Activated naive CD4-positive, alpha-beta T cell treated with anti-CD3 and anti-CD28 coated beads for 36 hours (primary cell): ENCODE measurements at regions of chr13 and their contacts with region 1.

Region 1: GRCh38 chr13:48879432-48879831 is 96.3 kb upstream of the FNDC3A start:
- DNase-seq: no peak
- H3K4me3 Mint-ChIP-seq: no peak overlapping the region
- H3K27ac Mint-ChIP-seq: no peak overlapping the region
- H3K4me1 Mint-ChIP-seq: peaks cover 42% of the 10 kb centered on the region
- H3K27me3 Mint-ChIP-seq: no peaks in the 10 kb centered on the region

Region 2: DNA sequence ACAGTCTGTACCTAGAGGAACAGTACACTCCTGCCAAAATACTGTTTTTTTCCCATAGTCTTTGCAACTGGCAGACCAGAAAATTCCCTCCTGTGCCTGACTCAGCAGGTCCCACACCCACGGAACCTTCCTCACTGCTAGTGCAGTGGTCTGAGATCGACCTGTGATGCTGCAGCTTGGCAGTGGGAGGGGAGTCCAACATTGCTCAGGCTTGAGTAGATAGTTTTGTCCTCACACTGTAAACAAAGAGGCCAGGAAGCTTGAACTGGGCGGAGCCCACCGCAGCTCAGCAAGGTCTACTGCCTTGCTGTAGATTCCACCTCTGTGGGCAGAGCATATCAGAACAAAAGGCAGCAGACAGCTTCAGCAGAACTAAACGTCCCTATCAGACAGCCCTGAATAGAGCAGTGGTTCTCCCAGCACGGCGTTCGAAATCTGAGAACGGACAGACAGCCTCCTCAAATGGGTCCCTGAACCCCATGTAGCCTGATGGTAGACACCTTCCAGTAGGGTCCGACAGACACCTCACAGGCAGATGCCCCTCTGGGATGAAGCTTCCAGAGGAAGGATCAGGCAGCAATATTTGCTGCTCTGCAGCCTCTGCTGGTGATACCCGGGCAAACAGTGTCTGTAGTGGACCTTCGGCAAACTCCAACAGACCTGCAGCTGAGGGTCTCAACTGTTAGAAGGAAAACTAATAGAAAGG is 971.1 kb before region 1 on chr13:
- CTCF ChIA-PET with region 1: no interaction called
- intact Hi-C with region 1: no loop called
- DNase-seq: no peak
- H3K4me3 Mint-ChIP-seq: no peak overlapping the region
- H3K27ac Mint-ChIP-seq: no peak overlapping the region
- H3K4me1 Mint-ChIP-seq: no peaks in the 10 kb centered on the region
- H3K27me3 Mint-ChIP-seq: no peaks in the 10 kb centered on the region

Region 3: GRCh38 chr13:48155848-48156247 is 723.6 kb before region 1 on chr13:
- CTCF ChIA-PET with region 1: no interaction called
- intact Hi-C with region 1: loop called (anchors 5 kb)
- DNase-seq: peak; percentile 44
- H3K4me3 Mint-ChIP-seq: peak overlapping the region; percentile 74
- H3K27ac Mint-ChIP-seq: peak overlapping the region; percentile 99
- H3K4me1 Mint-ChIP-seq: peaks cover 85% of the 10 kb centered on the region
- H3K27me3 Mint-ChIP-seq: no peaks in the 10 kb centered on the region

Region 4: DNA sequence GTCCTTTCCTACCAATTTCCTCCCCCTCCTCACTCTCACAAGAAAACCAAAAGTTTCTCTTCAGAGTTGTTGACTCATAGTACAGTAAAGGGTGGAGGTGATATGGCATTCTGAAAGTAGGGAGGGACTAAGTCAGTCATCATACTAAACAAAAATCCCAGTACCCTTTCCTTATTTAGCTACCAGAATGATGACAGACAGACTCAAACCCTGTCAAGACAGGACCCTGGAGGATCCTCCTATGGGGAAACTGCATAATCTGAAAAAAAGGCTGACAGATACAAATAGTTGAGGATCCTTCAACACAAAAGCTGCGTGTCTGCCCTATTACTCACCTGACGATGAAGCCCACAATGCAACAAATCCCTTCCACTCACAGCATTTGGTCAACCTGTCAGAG is 170.2 kb before region 1 on chr13:
- CTCF ChIA-PET with region 1: no interaction called
- intact Hi-C with region 1: loop called (anchors 1 kb)
- DNase-seq: no peak
- H3K4me3 Mint-ChIP-seq: no peak overlapping the region
- H3K27ac Mint-ChIP-seq: no peak overlapping the region
- H3K4me1 Mint-ChIP-seq: peaks cover 11% of the 10 kb centered on the region
- H3K27me3 Mint-ChIP-seq: no peaks in the 10 kb centered on the region

Region 5: DNA sequence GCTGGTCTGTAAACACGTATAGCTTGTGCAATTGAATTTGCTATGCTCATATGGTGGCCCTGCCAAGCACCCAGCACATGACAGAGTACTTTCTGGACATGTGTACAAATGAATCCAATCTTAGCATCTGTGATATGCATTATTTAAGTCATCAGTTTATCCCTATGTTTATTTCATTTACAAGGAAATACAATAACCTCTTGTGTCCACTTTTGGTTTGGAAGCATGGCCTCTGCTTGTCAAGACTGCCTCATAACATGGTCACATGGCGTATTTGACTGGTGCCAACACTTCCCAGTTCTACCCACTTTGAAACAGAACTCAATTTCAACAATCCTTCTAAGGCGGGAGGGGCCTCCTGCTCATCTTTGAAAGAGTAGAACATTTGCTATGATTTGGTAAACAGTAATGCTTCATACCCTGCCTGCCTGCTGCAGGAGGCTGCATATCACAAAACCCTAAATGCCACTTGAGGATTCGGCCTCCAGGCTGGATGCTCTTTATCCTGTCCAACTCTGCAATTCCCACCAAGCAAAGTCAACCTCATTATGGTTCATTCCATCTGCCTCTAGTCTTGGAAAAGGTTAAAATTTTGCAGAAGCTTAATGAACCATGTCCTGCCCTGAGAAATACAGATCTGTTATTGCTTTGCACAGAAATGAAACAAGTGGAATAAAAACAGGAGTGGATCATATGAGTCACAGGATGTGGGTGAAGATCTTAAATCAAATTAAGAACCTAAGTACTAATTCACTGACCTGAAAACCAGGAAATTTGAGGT is 74.4 kb before region 1 on chr13:
- CTCF ChIA-PET with region 1: no interaction called
- intact Hi-C with region 1: loop called (anchors 1 kb)
- DNase-seq: peak; percentile 9
- H3K4me3 Mint-ChIP-seq: no peak overlapping the region
- H3K27ac Mint-ChIP-seq: no peak overlapping the region
- H3K4me1 Mint-ChIP-seq: peaks cover 27% of the 10 kb centered on the region
- H3K27me3 Mint-ChIP-seq: no peaks in the 10 kb centered on the region

Region 6: DNA sequence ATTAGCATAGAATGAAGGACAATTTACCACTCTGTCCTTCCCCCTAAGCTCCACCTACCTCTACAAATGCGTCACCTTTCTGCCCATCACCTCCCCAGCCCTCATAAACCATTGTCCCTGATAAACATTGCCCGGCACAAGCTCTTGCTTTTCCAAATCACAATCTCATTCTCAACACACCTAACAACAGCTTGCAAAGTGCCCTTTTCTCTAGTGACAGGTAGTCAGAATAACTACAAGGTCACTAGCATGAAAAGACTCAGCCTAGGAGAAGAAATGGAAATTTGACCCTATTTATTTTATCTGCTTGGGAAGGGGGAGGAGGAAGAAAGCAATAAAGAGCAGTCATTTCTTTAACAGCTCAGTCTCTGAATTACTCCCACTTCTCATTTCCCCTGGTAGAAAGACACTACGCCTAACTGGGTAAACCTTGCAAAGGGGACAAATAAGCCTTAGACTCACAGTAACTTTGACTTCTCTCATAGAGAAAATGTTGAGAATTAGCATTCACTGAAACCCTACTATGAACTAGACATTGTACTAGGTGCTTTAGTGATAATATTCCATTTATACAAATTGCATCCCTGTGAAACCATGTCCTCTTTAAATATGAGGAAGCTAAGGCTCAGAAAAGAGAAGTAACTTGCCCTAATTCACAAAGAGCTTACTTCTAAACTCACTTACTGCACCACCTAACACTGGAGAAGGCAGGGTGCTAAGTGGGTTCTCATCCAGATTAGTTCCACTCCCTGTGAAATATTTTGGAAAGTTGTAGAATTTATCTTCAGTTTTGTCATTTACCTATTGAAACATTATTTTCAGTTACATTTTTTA is 19.9 kb before region 1 on chr13:
- CTCF ChIA-PET with region 1: no interaction called
- intact Hi-C with region 1: loop called (anchors 1 kb)
- DNase-seq: no peak
- H3K4me3 Mint-ChIP-seq: no peak overlapping the region
- H3K27ac Mint-ChIP-seq: no peak overlapping the region
- H3K4me1 Mint-ChIP-seq: peaks cover 23% of the 10 kb centered on the region
- H3K27me3 Mint-ChIP-seq: no peaks in the 10 kb centered on the region